ENCODE measurements at regions of chr1 and their contacts with region 1.

Region 1: GRCh38 chr1:228664399-228664914 is 70.8 kb upstream of the RHOU start:
- DNase-seq: peak; percentile 72 to 80
- H3K4me3 ChIP-seq: no peak overlapping the region
- H3K4me3 Mint-ChIP-seq: no peak overlapping the region
- H3K27ac Mint-ChIP-seq: no peak overlapping the region
- H3K4me1 ChIP-seq: peaks cover 8% of the 10 kb centered on the region
- H3K4me1 Mint-ChIP-seq: peaks cover 5% of the 10 kb centered on the region
- H3K27me3 ChIP-seq: no peaks in the 10 kb centered on the region
- H3K27me3 Mint-ChIP-seq: no peaks in the 10 kb centered on the region
- CTCF ChIP-seq: peak; percentile 65 to 90

Region 2: GRCh38 chr1:228387321-228387720 is 277.1 kb before region 1 on chr1:
- CTCF ChIA-PET with region 1: no interaction called
- POLR2A ChIA-PET with region 1: no interaction called
- intact Hi-C with region 1: no loop called
- DNase-seq: no peak
- H3K4me3 ChIP-seq: no peak overlapping the region
- H3K4me3 Mint-ChIP-seq: no peak overlapping the region
- H3K27ac Mint-ChIP-seq: no peak overlapping the region
- H3K4me1 ChIP-seq: no peaks in the 10 kb centered on the region
- H3K4me1 Mint-ChIP-seq: no peaks in the 10 kb centered on the region
- H3K27me3 ChIP-seq: no peaks in the 10 kb centered on the region
- H3K27me3 Mint-ChIP-seq: peaks cover 2% of the 10 kb centered on the region
- CTCF ChIP-seq: no peak

Region 3: GRCh38 chr1:228691926-228692325 is 27.5 kb after region 1 on chr1:
- CTCF ChIA-PET with region 1: interaction called, 3 read pairs
- POLR2A ChIA-PET with region 1: no interaction called
- intact Hi-C with region 1: loop called (anchors 1 kb)
- DNase-seq: peak in 1 of 2 experiments; percentile 63
- H3K4me3 ChIP-seq: no peak overlapping the region
- H3K4me3 Mint-ChIP-seq: no peak overlapping the region
- H3K27ac Mint-ChIP-seq: no peak overlapping the region
- H3K4me1 ChIP-seq: no peaks in the 10 kb centered on the region
- H3K4me1 Mint-ChIP-seq: no peaks in the 10 kb centered on the region
- H3K27me3 ChIP-seq: no peaks in the 10 kb centered on the region
- H3K27me3 Mint-ChIP-seq: no peaks in the 10 kb centered on the region
- CTCF ChIP-seq: peak; percentile 37 to 72

Region 4: GRCh38 chr1:228849011-228849541 is 184.6 kb after region 1 on chr1:
- CTCF ChIA-PET with region 1: no interaction called
- POLR2A ChIA-PET with region 1: no interaction called
- intact Hi-C with region 1: no loop called
- DNase-seq: no peak
- H3K4me3 ChIP-seq: no peak overlapping the region
- H3K4me3 Mint-ChIP-seq: no peak overlapping the region
- H3K27ac Mint-ChIP-seq: peak overlapping the region; percentile 56
- H3K4me1 ChIP-seq: peaks cover 46% of the 10 kb centered on the region
- H3K4me1 Mint-ChIP-seq: peaks cover 50% of the 10 kb centered on the region
- H3K27me3 ChIP-seq: no peaks in the 10 kb centered on the region
- H3K27me3 Mint-ChIP-seq: no peaks in the 10 kb centered on the region
- CTCF ChIP-seq: no peak

Region 5: DNA sequence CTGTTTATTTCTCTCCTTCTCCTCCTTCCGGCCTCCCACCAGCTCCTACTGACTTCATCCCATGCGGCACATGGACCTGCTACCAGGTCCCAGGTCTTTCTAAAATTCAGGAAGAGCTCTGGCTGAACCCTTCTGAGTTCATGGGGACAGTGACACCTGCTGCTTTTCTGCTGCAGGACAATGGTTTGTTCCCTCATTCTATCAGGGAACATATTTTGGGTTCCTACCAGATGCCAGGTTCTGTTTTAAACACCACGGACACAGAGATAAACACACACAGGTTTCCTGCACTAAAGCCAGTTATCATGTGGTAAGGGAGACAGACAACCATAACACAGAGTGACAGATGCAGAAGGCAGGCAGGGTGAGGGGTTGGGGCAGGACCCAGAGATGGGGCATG is 492.4 kb after region 1 on chr1:
- CTCF ChIA-PET with region 1: interaction called, 6 read pairs
- POLR2A ChIA-PET with region 1: no interaction called
- intact Hi-C with region 1: loop called (anchors 1 kb)
- DNase-seq: peak; percentile 42 to 49
- H3K4me3 ChIP-seq: no peak overlapping the region
- H3K4me3 Mint-ChIP-seq: no peak overlapping the region
- H3K27ac Mint-ChIP-seq: no peak overlapping the region
- H3K4me1 ChIP-seq: no peaks in the 10 kb centered on the region
- H3K4me1 Mint-ChIP-seq: no peaks in the 10 kb centered on the region
- H3K27me3 ChIP-seq: no peaks in the 10 kb centered on the region
- H3K27me3 Mint-ChIP-seq: no peaks in the 10 kb centered on the region
- CTCF ChIP-seq: peak; percentile 67

Region 6: GRCh38 chr1:229452956-229453801 is 788.7 kb after region 1 on chr1:
- CTCF ChIA-PET with region 1: no interaction called
- POLR2A ChIA-PET with region 1: no interaction called
- intact Hi-C with region 1: loop called (anchors 1 kb)
- DNase-seq: peak in 1 of 2 experiments; percentile 18
- H3K4me3 ChIP-seq: no peak overlapping the region
- H3K4me3 Mint-ChIP-seq: no peak overlapping the region
- H3K27ac Mint-ChIP-seq: no peak overlapping the region
- H3K4me1 ChIP-seq: no peaks in the 10 kb centered on the region
- H3K4me1 Mint-ChIP-seq: no peaks in the 10 kb centered on the region
- H3K27me3 ChIP-seq: no peaks in the 10 kb centered on the region
- H3K27me3 Mint-ChIP-seq: no peaks in the 10 kb centered on the region
- CTCF ChIP-seq: peak; percentile 44 to 78